Naive thymus-derived CD4-positive, alpha-beta T cell (primary cell): ENCODE measurements at regions of chr5 and their contacts with region 1.

Region 1: GRCh38 chr5:170338933-170339779 is 41.6 kb upstream of the LCP2 start:
- DNase-seq: peak in 8 of 9 donors; percentile 53 to 75 (median 68)
- ATAC-seq: peak; percentile 90
- H3K4me3 ChIP-seq: no peak overlapping the region
- H3K4me3 Mint-ChIP-seq: peak overlapping the region in 3 of 10 donors; percentile 30 to 48 (median 42)
- H3K27ac ChIP-seq: peak overlapping the region; percentile 15
- H3K27ac Mint-ChIP-seq: peak overlapping the region in 8 of 9 donors; percentile 75 to 98 (median 86)
- H3K4me1 ChIP-seq: peaks cover 27 to 39% of the 10 kb centered on the region in 2 donors
- H3K4me1 Mint-ChIP-seq: peaks cover 0 to 48% (median 36%) of the 10 kb centered on the region in 7 donors
- H3K27me3 ChIP-seq: no peaks in the 10 kb centered on the region
- H3K27me3 Mint-ChIP-seq: peaks cover 0 to under 1% (median 0%) of the 10 kb centered on the region in 5 donors

Region 2: GRCh38 chr5:169650701-169651331 is 688.3 kb before region 1 on chr5:
- CTCF ChIA-PET with region 1: no interaction called
- POLR2A ChIA-PET with region 1: no interaction called
- intact Hi-C with region 1: loop called in 1 of 2 experiments (anchors 10 kb)
- DNase-seq: no peak
- ATAC-seq: peak; percentile 61
- H3K4me3 ChIP-seq: peak overlapping the region; percentile 25
- H3K4me3 Mint-ChIP-seq: peak overlapping the region; percentile 20 to 89 (median 66)
- H3K27ac ChIP-seq: peak overlapping the region; percentile 24
- H3K27ac Mint-ChIP-seq: peak overlapping the region; percentile 73 to 96 (median 91)
- H3K4me1 ChIP-seq: peaks cover 62 to 74% of the 10 kb centered on the region in 2 donors
- H3K4me1 Mint-ChIP-seq: peaks cover 79 to 99% (median 85%) of the 10 kb centered on the region in 7 donors
- H3K27me3 ChIP-seq: no peaks in the 10 kb centered on the region
- H3K27me3 Mint-ChIP-seq: no peaks in the 10 kb centered on the region

Region 3: DNA sequence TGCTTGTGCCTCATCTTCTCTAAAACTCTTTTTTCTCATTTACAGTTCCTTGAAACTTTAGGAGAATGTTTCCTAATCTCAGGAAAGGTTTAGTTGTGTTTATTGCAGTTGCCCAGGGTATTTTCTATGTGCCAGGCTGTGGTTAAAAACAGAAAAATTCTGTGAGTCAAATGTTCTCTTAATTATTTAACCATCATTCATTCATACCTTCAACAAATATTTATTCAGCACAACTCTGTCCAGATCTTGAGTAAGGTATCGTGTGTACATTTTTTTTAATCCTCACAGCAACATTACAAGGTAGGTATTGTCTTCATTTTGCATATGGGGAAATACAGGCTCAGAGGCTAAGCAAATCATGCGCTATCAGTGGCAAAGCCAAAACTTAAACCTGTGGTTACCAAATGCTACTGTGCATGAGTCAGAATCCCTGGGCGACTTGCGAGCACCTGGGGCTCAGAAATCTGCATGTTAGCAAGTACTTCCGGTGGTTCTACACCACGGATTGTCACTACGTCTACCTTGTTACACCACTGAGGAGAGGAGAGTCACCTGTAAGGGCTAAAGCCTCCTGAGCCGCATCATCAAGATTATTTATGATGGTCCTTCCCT is 85.2 kb before region 1 on chr5:
- CTCF ChIA-PET with region 1: interaction called, 12 read pairs
- POLR2A ChIA-PET with region 1: interaction called, 6 read pairs
- intact Hi-C with region 1: no loop called
- DNase-seq: peak in 8 of 9 donors; percentile 41 to 76 (median 56)
- ATAC-seq: peak; percentile 95
- H3K4me3 ChIP-seq: no peak overlapping the region
- H3K4me3 Mint-ChIP-seq: peak overlapping the region in 8 of 10 donors; percentile 5 to 61 (median 40)
- H3K27ac ChIP-seq: peak overlapping the region; percentile 53
- H3K27ac Mint-ChIP-seq: peak overlapping the region; percentile 28 to 97 (median 75)
- H3K4me1 ChIP-seq: peaks cover 19 to 21% of the 10 kb centered on the region in 2 donors
- H3K4me1 Mint-ChIP-seq: peaks cover 20 to 67% (median 63%) of the 10 kb centered on the region in 7 donors
- H3K27me3 ChIP-seq: no peaks in the 10 kb centered on the region
- H3K27me3 Mint-ChIP-seq: no peaks in the 10 kb centered on the region

Region 4: DNA sequence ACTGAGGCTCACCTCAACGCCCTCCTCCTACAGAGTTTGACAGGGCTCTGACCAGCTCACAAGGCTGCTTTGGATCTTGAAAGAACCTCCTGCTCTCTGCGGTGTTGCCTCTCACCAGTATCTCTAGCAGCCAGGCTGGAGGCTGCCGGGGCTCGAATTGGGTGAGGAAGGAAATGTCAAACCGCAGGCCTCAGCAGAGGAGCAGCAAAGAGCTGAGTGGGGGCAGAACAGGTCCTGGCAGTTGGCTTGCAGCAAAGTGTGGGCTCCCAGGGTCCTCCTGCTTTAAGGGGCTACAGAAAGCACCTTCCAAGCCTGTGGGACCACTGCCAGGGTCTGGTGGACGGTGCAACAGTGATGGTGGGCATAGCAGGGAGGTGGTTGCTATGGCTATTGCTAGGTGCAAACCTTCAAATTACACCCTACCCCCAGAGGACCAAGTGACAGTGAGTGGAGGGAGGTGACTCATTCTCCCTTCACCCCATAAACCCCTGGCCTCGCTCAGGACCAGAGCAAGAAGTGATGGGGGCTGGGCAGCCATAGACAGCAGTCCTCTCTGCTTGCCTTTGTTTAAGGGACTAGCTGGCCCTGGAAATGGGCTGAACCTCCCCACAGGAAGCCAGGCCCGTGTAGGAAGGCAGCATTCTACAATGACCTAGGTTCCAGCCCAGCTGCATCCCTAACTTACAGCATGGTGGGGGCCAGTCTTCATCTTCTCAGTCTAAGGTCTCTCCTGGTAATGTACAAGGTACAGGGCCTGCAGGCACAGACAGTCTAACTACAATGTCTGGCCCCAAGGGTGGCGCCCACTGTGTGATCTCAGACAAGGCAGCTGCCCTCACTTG is 60.3 kb before region 1 on chr5:
- CTCF ChIA-PET with region 1: interaction called, 278 read pairs
- POLR2A ChIA-PET with region 1: interaction called, 391 read pairs
- intact Hi-C with region 1: loop called in 1 of 2 experiments (anchors 1 kb)
- DNase-seq: peak; percentile 66 to 93 (median 90)
- ATAC-seq: peak; percentile 84
- H3K4me3 ChIP-seq: peak overlapping the region; percentile 33
- H3K4me3 Mint-ChIP-seq: peak overlapping the region; percentile 68 to 100 (median 86)
- H3K27ac ChIP-seq: peak overlapping the region; percentile 75
- H3K27ac Mint-ChIP-seq: peak overlapping the region; percentile 93 to 98 (median 95)
- H3K4me1 ChIP-seq: peaks cover 92 to 94% of the 10 kb centered on the region in 2 donors
- H3K4me1 Mint-ChIP-seq: peaks cover 72 to 100% (median 96%) of the 10 kb centered on the region in 7 donors
- H3K27me3 ChIP-seq: no peaks in the 10 kb centered on the region
- H3K27me3 Mint-ChIP-seq: peaks cover 0 to 2% (median 0%) of the 10 kb centered on the region in 5 donors

Region 5: GRCh38 chr5:170302653-170303501 is 36.3 kb before region 1 on chr5:
- CTCF ChIA-PET with region 1: interaction called, 120 read pairs
- POLR2A ChIA-PET with region 1: interaction called, 391 read pairs
- intact Hi-C with region 1: loop called in 1 of 2 experiments (anchors 1 kb)
- DNase-seq: peak; percentile 44 to 92 (median 84)
- ATAC-seq: peak; percentile 86
- H3K4me3 ChIP-seq: peak overlapping the region; percentile 54
- H3K4me3 Mint-ChIP-seq: peak overlapping the region; percentile 85 to 99 (median 92)
- H3K27ac ChIP-seq: peak overlapping the region; percentile 79
- H3K27ac Mint-ChIP-seq: peak overlapping the region; percentile 74 to 99 (median 96)
- H3K4me1 ChIP-seq: peaks cover 56 to 61% of the 10 kb centered on the region in 2 donors
- H3K4me1 Mint-ChIP-seq: peaks cover 56 to 98% (median 87%) of the 10 kb centered on the region in 7 donors
- H3K27me3 ChIP-seq: no peaks in the 10 kb centered on the region
- H3K27me3 Mint-ChIP-seq: no peaks in the 10 kb centered on the region

Region 6: DNA sequence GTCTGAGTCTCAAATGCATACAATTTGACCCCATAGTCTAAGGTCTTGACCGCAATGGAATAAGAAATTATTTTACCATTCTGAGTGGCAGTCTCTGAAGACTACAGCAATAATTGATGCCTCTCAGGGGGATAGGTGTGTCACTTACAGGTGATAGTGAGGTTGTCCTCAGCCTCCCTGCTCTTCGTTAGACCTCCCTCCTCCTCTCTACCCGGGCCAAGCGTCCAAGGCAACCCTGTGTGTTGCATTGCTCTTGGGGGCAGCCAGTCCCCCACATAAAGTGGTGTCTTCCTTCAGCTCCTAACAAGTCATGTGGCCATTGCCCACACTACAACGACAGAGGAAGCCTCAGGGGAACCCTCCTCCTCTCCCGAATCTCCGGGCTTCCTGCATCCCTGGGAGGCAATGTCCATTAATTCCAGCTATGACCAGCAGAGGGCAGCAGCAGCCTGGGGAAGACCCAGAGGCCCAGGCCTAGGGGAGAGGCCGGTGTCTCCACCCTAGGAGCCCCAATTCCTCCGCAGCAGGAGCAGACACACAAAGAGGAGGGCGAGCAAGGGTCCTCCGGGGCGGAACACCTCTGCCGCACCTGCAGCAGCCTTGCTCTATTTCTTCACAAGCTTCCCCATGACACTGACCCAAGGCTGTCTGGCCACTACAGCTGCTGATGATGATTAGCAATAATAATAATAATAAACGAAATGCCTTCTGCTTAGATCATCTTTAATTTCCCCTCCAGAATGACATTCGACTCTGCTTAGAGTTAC is 299.5 kb after region 1 on chr5:
- CTCF ChIA-PET with region 1: no interaction called
- POLR2A ChIA-PET with region 1: no interaction called
- intact Hi-C with region 1: loop called in 1 of 2 experiments (anchors 10 kb)
- DNase-seq: peak; percentile 14 to 72 (median 44)
- ATAC-seq: peak; percentile 69
- H3K4me3 ChIP-seq: no peak overlapping the region
- H3K4me3 Mint-ChIP-seq: no peak overlapping the region
- H3K27ac ChIP-seq: no peak overlapping the region
- H3K27ac Mint-ChIP-seq: peak overlapping the region in 1 of 9 donors; percentile 65
- H3K4me1 ChIP-seq: peaks cover 0 to 10% of the 10 kb centered on the region in 2 donors
- H3K4me1 Mint-ChIP-seq: peaks cover 3 to 15% (median 10%) of the 10 kb centered on the region in 7 donors
- H3K27me3 ChIP-seq: no peaks in the 10 kb centered on the region
- H3K27me3 Mint-ChIP-seq: peaks cover 6 to 27% (median 10%) of the 10 kb centered on the region in 5 donors